Activated CD4-positive, alpha-beta T cell treated with anti-CD3 and anti-CD28 coated beads for 36 hours (primary cell): ENCODE measurements at regions of chr17 and their contacts with region 1.

Region 1: DNA sequence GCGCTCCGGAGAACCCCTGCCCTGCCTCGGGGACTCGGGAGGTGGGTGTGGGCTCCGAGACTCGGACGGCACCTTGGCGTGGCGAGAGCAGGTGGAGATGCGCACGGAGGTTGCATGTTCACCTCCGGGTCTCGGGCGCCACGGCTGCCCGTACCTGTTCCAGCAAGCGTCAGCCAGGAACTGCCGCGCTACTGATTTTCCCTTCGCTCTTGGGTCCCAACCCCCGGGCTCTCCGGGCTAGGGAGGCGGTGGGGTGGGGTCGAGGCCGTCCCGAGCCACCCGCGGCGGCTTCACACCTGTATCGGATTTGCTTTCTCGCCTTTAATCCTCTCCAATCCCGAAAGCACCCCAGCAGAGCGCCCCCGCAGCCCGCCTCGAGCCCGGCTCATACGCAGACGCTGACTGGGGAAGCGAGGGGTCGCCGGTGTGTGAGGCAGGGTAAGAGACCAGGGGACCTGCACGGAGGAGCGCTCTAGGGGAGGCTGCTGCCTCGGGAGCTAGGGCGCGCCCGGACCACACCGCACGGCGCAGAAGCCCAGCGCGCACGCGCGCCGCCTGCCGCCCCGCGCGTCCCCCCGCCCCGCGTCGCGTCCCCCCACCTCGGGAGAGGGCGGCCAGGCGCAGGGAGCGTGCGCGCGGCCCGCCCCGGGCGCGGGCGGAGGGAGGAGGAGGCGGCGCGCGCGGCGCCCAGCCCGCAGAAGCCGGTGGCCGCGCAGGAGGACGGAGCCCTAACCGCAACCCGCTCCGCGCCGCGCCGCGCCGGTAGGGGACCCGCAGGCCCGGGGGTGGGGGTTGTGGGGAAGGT is at the start of gene DUSP14:
- DNase-seq: peak; percentile 88
- ATAC-seq: peak; percentile 74
- H3K4me3 Mint-ChIP-seq: peak within 1 kb of the TSS; percentile 88
- H3K27ac Mint-ChIP-seq: peak within 1 kb of the TSS; percentile 93
- H3K4me1 Mint-ChIP-seq: peaks cover 44% of the 10 kb centered on the region
- H3K27me3 Mint-ChIP-seq: no peaks in the 10 kb centered on the region
- total RNA-seq, gene DUSP14: 11.9 to 13.1 TPM

Region 2: DNA sequence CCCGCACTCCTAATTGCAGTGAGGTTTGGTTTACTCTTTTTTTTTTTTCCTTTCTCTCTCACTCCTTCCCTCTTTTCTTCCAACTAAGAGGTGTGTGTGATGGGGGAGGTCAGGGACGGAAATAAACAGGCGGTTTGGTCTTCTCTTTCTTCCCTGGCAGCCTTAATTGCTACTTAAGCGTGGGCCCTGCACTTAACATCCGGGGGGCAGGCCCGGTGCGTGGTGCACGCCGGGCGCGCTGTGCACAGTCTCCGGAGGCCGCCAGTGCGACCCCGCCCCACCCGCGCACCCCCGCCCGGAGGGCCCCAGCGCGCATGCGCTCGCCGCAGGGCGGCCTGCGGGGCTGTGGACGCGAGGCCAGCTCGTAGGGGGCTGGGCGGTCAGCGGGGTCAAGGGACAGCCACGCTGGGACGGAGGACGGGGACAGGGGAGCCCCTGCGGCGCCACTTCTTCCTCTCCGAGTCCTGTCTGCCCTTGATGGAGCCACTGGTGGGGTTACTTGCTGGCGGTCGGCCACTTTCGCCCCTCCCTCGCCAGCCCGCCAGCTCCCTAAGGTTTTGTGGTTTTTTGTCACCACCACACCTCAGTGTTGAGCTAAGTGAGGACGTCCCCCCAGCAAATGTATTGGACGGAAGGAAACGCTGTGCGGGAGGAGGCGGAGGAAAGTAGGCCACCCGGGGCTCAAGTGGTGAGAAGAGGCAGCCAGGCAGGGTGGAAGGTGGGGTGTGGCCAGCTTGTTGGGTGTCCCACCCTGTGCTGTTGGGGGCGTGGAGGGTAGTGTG is 767.1 kb before region 1 on chr17:
- CTCF ChIA-PET with region 1: no interaction called
- POLR2A ChIA-PET with region 1: no interaction called
- intact Hi-C with region 1: loop called in 1 of 2 experiments (anchors 5 kb)
- DNase-seq: peak; percentile 91
- ATAC-seq: peak; percentile 94
- H3K4me3 Mint-ChIP-seq: peak overlapping the region; percentile 76
- H3K27ac Mint-ChIP-seq: peak overlapping the region; percentile 98
- H3K4me1 Mint-ChIP-seq: peaks cover 46% of the 10 kb centered on the region
- H3K27me3 Mint-ChIP-seq: no peaks in the 10 kb centered on the region

Region 3: DNA sequence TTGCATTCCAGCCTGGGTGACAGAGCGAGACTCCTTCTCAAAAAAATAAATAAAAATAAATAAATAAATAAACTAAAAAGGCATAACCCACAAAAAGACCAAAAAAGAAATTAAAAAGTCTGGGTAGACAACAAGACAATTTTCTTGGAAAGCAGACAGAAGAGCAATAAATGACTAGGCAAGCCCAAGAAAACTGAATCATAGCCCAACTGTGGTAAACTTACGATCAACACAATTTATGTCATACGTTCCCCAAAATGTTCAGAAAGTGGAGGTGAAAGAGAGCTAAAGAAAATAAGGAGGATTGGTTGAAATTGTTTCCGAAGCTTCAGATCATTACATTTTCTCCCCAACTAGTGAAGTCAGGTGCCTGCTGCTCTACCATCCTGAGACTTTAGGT is 144.9 kb before region 1 on chr17:
- CTCF ChIA-PET with region 1: no interaction called
- POLR2A ChIA-PET with region 1: no interaction called
- intact Hi-C with region 1: no loop called
- DNase-seq: no peak
- ATAC-seq: peak; percentile 64
- H3K4me3 Mint-ChIP-seq: peak overlapping the region; percentile 28
- H3K27ac Mint-ChIP-seq: peak overlapping the region; percentile 68
- H3K4me1 Mint-ChIP-seq: peaks cover 11% of the 10 kb centered on the region
- H3K27me3 Mint-ChIP-seq: no peaks in the 10 kb centered on the region

Region 4: DNA sequence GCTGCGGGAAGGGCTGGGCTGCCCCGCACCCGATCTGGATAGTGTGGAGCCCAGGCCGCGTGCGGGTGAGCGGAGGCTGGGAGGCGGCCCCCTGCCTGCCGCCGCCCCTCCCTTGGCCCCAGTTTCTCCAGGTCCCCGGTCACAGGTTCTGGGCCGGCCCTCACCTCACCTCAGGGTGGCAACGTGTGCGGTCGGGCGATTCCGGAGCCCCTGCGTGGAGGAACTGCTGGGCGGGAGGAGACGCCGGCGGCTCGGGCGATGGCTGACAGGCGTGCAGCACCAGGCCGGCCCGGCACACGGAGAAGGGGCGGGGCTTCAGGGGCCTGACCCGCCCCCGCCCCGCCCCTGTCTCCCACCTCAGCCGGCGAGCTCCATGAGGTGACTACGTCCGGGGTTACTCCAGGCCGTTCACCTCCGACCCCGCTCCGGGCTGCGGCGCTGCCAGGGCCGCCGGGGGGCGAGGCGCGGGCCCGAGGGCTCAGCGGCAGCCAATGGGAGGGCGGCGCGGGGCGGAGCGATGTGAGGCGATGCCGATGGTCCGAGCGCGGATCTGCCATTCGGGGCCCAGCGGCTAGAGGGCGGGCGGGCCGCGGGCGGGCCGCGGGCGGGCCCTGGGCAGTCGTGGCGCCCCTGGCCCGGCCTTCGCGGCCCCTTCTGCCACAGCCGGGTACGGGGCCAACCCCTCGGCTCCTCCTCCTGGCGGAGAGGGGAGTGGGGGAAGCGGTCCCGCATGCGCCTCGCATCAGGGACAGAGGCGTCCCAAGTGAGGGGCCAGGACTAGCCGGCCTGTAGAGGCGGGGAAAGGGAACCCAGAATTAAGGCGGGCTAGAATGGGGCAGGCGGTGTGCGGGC is 130.3 kb before region 1 on chr17:
- CTCF ChIA-PET with region 1: no interaction called
- POLR2A ChIA-PET with region 1: no interaction called
- intact Hi-C with region 1: loop called in 1 of 2 experiments (anchors 1 kb)
- DNase-seq: peak; percentile 96
- ATAC-seq: peak; percentile 98
- H3K4me3 Mint-ChIP-seq: peak overlapping the region; percentile 88
- H3K27ac Mint-ChIP-seq: peak overlapping the region; percentile 83
- H3K4me1 Mint-ChIP-seq: peaks cover 23% of the 10 kb centered on the region
- H3K27me3 Mint-ChIP-seq: no peaks in the 10 kb centered on the region

Region 5: DNA sequence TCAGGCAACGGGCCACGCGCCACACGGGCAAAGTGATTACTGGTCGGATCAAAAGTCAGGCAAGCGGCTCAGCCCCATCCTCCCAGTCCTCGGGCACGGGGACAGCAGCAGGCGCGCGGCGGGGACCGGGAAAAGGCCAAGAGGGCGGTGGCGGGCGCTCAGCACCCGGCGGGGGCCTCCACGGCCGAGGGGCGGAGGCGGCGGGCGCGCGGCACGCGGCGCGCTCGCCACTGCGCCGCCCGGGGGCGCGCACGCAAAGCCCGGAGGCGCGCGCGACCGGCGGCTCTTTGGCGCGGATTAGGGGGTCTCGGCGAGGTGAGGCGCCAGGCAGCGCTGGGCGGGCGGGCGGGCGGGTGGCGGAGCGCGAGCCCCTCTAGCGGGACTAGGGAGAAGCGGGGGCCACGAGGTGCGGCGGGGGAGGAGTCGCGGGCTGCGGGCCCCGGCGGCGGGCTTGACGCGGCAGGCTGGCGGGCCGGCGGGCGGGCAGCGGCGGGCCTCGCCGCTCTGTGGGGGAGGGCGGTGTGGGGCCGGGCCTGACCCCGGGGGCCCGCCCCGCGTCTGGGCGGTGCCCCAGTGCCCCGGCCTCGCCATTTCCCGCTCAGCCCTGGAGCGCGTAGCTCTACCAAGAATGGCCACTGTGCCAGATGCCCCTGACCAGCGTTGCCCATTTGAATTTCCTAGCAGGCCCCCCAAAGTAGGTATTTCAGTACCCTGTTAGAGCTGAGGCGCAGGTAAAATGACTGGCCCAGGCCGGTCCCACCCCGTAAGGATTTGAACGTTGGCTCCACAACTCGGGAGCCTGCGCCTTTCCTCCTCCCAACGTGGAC is 82.6 kb before region 1 on chr17 and contains the starts of genes ACACA and TADA2A:
- CTCF ChIA-PET with region 1: no interaction called
- POLR2A ChIA-PET with region 1: interaction called, 3 read pairs
- intact Hi-C with region 1: loop called (anchors 1 to 2 kb)
- DNase-seq: peak; percentile 88
- ATAC-seq: peak; percentile 93
- H3K4me3 Mint-ChIP-seq: peak within 1 kb of the TSS; percentile 99
- H3K27ac Mint-ChIP-seq: peak within 1 kb of the TSS; percentile 98
- H3K4me1 Mint-ChIP-seq: peaks cover 46% of the 10 kb centered on the region
- H3K27me3 Mint-ChIP-seq: no peaks in the 10 kb centered on the region
- total RNA-seq, gene ACACA: 57.2 to 61.1 TPM
- total RNA-seq, gene TADA2A: 29.9 to 32.9 TPM

Region 6: GRCh38 chr17:37430051-37430627 is 59.3 kb before region 1 on chr17:
- CTCF ChIA-PET with region 1: no interaction called
- POLR2A ChIA-PET with region 1: no interaction called
- intact Hi-C with region 1: loop called in 1 of 2 experiments (anchors 1 kb)
- DNase-seq: no peak
- ATAC-seq: peak; percentile 89
- H3K4me3 Mint-ChIP-seq: peak overlapping the region; percentile 24
- H3K27ac Mint-ChIP-seq: peak overlapping the region; percentile 91
- H3K4me1 Mint-ChIP-seq: peaks cover 27% of the 10 kb centered on the region
- H3K27me3 Mint-ChIP-seq: no peaks in the 10 kb centered on the region

Region 7: DNA sequence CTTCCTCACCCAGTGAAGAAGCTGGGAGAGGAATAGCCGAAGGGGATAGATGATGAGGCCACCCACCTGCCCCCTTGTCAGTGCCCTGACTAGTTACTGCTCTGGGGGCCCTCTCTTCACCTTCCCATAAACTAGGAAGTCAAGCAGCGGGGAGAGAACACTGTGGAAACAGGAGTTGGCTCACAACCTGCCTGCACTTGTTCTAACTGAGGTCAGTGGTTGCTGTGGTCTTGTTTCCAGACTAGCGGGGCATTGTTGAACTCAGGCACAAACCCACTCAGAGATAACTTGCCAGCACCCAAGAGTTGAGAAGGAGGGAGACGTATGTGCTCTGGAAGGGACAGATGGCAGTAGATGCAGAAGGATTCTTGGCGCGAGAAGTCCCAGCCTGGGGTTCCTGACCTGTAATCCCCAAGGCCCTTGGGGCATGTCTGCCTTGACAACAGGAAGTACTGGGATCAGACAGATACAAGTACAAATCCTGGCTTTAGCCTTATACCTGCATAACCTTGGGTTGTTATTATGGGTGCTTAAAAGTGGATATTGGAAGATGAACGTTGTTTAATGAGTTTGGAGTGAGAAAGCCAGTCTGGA is 202.5 kb after region 1 on chr17:
- CTCF ChIA-PET with region 1: no interaction called
- POLR2A ChIA-PET with region 1: no interaction called
- intact Hi-C with region 1: no loop called
- DNase-seq: no peak
- ATAC-seq: no peak
- H3K4me3 Mint-ChIP-seq: no peak overlapping the region
- H3K27ac Mint-ChIP-seq: no peak overlapping the region
- H3K4me1 Mint-ChIP-seq: no peaks in the 10 kb centered on the region
- H3K27me3 Mint-ChIP-seq: peaks cover 5% of the 10 kb centered on the region